Activated CD4-positive, alpha-beta T cell treated with anti-CD3 and anti-CD28 coated beads for 36 hours (primary cell): ENCODE measurements at regions of chr5 and their contacts with region 1.

Region 1: DNA sequence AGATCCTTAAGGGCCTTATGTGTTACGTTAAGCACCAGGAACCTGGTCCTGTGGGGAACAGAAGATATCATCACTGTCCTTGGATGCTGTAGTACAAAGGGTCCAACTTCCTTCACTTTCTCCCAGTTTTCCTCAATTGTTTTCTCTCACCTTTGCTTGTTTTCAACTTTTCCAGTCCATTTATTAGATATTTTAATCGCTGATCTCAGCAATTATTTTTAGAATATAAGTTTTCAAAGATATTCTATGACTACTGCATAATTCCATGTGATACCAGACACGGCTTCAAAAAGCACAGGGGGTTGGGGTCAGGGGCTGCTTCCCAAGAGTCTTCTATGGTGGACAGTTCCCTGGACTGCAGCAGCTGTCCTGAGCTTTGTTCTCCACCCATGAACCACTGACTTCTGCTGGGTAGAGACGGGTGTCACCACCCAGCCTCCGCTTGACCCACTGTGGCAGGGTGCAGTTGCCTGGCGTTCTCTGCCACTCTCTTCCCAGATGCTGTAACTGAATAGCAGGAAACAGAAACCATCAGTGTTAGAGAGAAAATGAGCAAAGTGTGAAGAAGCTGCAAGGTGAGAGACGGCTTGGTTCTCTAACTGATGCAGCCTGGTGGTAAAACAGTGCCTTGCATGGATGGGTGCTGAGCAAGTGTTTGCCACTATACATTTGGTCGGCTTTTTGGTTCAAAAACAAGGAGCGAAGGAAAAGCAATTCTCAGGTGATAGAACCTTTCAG is 383.0 kb downstream of the RAB3C start:
- DNase-seq: peak; percentile 16
- ATAC-seq: no peak
- H3K4me3 Mint-ChIP-seq: no peak overlapping the region
- H3K27ac Mint-ChIP-seq: no peak overlapping the region
- H3K4me1 Mint-ChIP-seq: peaks cover 11% of the 10 kb centered on the region
- H3K27me3 Mint-ChIP-seq: no peaks in the 10 kb centered on the region

Region 2: DNA sequence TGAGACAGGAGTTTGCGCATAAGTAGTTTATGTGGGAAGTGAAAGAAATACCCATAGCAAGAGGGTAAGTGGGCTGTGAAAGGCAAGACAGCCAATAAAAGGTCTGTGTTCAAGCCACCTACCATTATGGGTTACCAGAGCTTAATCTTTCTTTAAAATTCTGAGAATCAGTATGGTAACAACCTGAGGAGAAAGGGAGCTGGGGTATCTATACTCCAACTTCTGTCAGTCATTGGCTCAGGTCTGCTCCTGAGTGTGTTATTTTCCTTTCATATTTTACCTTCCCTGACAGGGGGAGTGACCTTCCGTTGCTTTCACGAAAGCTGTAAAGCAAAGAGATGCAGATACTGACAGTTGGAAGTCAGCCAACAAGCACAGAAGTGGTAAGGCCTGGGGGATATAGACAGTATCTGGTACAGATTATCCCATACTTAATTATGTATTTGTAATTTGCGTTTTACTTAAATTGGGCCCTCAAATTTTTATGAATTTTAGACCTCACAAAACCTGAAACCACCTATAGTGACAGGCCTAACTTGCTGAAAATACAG is 149.6 kb before region 1 on chr5:
- CTCF ChIA-PET with region 1: no interaction called
- POLR2A ChIA-PET with region 1: no interaction called
- intact Hi-C with region 1: no loop called
- DNase-seq: no peak
- ATAC-seq: no peak
- H3K4me3 Mint-ChIP-seq: no peak overlapping the region
- H3K27ac Mint-ChIP-seq: no peak overlapping the region
- H3K4me1 Mint-ChIP-seq: no peaks in the 10 kb centered on the region
- H3K27me3 Mint-ChIP-seq: no peaks in the 10 kb centered on the region

Region 3: DNA sequence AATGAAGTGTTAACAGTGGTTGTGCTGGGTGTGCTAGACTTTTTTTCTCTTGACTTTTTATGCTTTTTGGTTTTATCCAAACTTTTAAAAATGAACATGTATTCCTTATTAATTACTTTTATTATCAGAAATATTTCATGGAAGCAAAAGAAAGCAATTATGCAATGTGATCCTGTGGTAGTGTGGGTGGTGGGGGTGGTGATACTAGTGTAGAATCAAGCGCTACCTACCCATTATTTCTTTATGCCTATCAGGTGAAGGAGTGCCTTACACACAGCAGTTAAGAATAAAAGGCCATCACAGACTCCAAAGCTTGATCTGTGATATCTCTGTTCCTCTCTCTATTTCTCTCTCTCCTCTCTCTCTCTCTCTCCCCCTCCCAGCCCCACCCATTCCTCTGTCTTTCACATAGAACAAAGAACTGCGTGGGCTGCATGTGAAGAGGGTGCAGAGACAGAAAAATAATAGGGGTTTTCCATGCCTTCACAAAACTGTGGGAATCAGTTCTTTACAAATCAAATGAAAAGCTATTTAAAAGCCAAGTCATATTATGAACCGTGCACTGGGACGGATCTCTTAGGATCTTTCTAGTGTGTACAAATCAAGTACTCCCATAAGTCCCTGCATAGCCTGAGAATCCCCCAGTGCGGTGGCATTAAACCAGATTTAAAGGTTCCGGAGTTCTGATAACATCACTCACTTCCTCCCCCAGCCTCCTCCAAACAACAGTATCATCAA is 31.8 kb before region 1 on chr5:
- CTCF ChIA-PET with region 1: no interaction called
- POLR2A ChIA-PET with region 1: no interaction called
- intact Hi-C with region 1: loop called in 1 of 2 experiments (anchors 5 kb)
- DNase-seq: peak; percentile 60
- ATAC-seq: peak; percentile 79
- H3K4me3 Mint-ChIP-seq: peak overlapping the region; percentile 3
- H3K27ac Mint-ChIP-seq: peak overlapping the region; percentile 59
- H3K4me1 Mint-ChIP-seq: peaks cover 43% of the 10 kb centered on the region
- H3K27me3 Mint-ChIP-seq: no peaks in the 10 kb centered on the region

Region 4: GRCh38 chr5:59007460-59008063 is 41.7 kb after region 1 on chr5:
- CTCF ChIA-PET with region 1: no interaction called
- POLR2A ChIA-PET with region 1: no interaction called
- intact Hi-C with region 1: loop called in 1 of 2 experiments (anchors 5 kb)
- DNase-seq: no peak
- ATAC-seq: no peak
- H3K4me3 Mint-ChIP-seq: no peak overlapping the region
- H3K27ac Mint-ChIP-seq: no peak overlapping the region
- H3K4me1 Mint-ChIP-seq: peaks cover 73% of the 10 kb centered on the region
- H3K27me3 Mint-ChIP-seq: no peaks in the 10 kb centered on the region